Activated T-helper 2 cell treated with anti-CD3 and anti-CD28 coated beads, Interferon-gamma antibody, Interleukin-2, Interleukin-4, amounts not matched to agents 10 μg/mL and 5 μg/mL and 100 μg/mL, durations not matched to agents 14 hours and 24 hours and 36 hours (primary cell): ENCODE measurements at regions of chr1 and their contacts with region 1.

Region 1: DNA sequence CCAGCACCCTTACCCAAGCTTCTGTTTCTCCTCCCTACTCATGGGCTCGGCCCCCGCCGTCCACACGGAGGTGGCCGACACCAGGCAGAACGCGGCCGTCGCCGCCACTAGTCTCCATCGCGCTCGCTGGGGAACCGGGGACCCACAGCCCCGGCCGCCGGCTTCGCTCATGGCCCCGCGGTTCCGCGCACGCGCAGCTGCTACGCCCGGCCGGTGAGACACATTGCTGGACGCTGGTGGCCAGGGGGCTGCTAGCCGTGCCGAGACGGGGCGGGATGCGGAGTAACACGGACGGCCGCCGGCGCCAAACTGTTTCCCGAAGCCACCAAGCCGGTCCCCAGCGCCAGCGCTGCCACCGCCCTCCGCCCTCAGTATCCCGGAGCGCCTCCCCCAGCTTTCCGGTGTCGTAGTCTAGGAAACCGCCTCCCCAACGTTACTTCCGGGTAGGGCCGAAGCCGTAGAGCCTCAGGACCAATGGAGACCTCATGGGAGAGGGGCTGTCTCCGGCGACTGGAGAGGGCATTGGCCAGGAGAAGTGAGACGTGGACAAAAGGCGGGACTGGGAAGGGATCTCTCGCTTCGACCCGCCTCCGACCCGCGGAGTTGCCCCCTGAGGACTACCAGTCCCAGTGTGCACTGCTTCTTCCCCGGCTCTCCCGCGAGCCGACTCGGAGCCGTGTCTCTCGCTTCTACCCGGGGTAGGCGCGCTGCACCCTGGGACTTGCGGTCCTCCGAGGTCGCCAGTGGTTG is at the start of gene EDEM3:
- DNase-seq: peak; percentile 98
- H3K4me3 Mint-ChIP-seq: peak within 1 kb of the TSS; percentile 87
- H3K27ac Mint-ChIP-seq: peak within 1 kb of the TSS; percentile 79
- H3K4me1 Mint-ChIP-seq: peaks cover 41% of the 10 kb centered on the region
- H3K27me3 Mint-ChIP-seq: peaks cover 19% of the 10 kb centered on the region
- total RNA-seq, gene EDEM3: 25.3 and 30.2 TPM in 2 replicates

Region 2: DNA sequence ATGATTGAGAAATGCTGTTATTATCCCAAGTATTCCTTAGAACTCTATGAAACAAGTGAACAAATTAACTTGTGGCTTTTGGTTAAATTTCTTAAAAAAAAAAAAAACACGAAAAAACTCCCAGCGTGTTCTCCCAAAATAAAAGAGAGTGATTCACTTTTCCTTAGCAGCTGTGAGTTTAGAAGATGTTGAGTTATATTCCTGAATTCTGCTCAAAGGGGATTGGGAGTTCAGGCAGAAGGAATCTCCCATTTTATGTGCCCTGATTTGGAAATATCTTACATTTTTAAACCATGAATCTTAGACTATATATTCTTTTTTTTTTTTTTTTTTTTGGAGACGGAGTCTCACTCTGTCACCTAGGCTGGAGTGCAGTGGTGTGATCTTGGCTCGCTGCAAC is 1248.1 kb before region 1 on chr1:
- intact Hi-C with region 1: no loop called
- DNase-seq: no peak
- H3K4me3 Mint-ChIP-seq: no peak overlapping the region
- H3K27ac Mint-ChIP-seq: no peak overlapping the region
- H3K4me1 Mint-ChIP-seq: peaks cover 17% of the 10 kb centered on the region
- H3K27me3 Mint-ChIP-seq: no peaks in the 10 kb centered on the region

Region 3: GRCh38 chr1:183635606-183636333 is 1118.9 kb before region 1 on chr1 and contains the start of gene ARPC5:
- intact Hi-C with region 1: loop called (anchors 10 kb)
- DNase-seq: peak; percentile 96
- H3K4me3 Mint-ChIP-seq: peak within 1 kb of the TSS; percentile 100
- H3K27ac Mint-ChIP-seq: peak within 1 kb of the TSS; percentile 100
- H3K4me1 Mint-ChIP-seq: peaks cover 34% of the 10 kb centered on the region
- H3K27me3 Mint-ChIP-seq: peaks cover 11% of the 10 kb centered on the region
- total RNA-seq, gene ARPC5: 160 and 169 TPM in 2 replicates

Region 4: GRCh38 chr1:184792450-184792969 is 37.9 kb after region 1 on chr1:
- intact Hi-C with region 1: loop called (anchors 5 kb)
- DNase-seq: no peak
- H3K4me3 Mint-ChIP-seq: no peak overlapping the region
- H3K27ac Mint-ChIP-seq: no peak overlapping the region
- H3K4me1 Mint-ChIP-seq: peaks cover 9% of the 10 kb centered on the region
- H3K27me3 Mint-ChIP-seq: no peaks in the 10 kb centered on the region

Region 5: GRCh38 chr1:184892116-184892515 is 137.5 kb after region 1 on chr1:
- intact Hi-C with region 1: loop called (anchors 1 kb)
- DNase-seq: no peak
- H3K4me3 Mint-ChIP-seq: no peak overlapping the region
- H3K27ac Mint-ChIP-seq: peak overlapping the region; percentile 85
- H3K4me1 Mint-ChIP-seq: peaks cover 41% of the 10 kb centered on the region
- H3K27me3 Mint-ChIP-seq: no peaks in the 10 kb centered on the region

Region 6: DNA sequence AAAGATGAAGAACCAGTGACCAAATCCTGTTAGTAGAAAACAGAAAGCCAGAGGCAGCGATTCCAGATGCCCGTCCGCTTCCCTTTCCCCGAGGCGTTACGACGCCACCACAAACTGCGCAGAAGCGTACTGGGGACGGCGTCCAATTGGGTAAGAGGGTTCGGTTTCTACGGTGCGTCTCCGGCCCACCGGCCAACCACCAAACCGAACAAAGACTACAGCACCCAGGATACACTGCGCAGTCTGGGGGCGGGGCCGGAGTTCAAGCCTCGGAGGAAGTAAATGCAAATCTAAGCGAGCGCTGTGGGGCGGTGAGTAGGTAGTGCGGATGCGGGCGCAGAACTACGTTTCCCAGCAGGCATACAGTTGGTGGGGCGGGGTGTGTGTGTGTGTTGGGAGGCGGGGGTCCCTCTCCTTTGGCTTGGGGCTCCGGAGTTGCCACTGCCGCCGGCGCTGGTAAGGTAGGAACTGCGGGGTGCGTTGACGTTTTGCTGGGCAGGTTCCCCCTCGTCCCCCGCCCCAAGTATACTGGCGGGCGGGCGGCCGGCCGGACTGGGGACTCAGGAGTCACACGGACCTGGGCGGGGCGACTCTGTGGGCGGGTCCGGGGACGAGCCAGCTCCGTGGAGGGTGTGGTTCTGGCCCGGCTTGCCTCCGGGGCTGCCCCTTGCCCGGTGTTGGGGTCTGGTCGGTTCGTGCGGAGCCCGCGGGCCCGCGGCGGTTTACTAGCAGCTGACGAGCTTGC is 402.4 kb after region 1 on chr1 and contains the starts of genes SWT1 and TRMT1L:
- intact Hi-C with region 1: loop called (anchors 1 kb)
- DNase-seq: peak; percentile 98
- H3K4me3 Mint-ChIP-seq: peak within 1 kb of the TSS; percentile 95
- H3K27ac Mint-ChIP-seq: peak within 1 kb of the TSS; percentile 95
- H3K4me1 Mint-ChIP-seq: peaks cover 52% of the 10 kb centered on the region
- H3K27me3 Mint-ChIP-seq: no peaks in the 10 kb centered on the region
- total RNA-seq, gene SWT1: 2.1 and 2.7 TPM in 2 replicates
- total RNA-seq, gene TRMT1L: 25.9 and 28.7 TPM in 2 replicates

Region 7: DNA sequence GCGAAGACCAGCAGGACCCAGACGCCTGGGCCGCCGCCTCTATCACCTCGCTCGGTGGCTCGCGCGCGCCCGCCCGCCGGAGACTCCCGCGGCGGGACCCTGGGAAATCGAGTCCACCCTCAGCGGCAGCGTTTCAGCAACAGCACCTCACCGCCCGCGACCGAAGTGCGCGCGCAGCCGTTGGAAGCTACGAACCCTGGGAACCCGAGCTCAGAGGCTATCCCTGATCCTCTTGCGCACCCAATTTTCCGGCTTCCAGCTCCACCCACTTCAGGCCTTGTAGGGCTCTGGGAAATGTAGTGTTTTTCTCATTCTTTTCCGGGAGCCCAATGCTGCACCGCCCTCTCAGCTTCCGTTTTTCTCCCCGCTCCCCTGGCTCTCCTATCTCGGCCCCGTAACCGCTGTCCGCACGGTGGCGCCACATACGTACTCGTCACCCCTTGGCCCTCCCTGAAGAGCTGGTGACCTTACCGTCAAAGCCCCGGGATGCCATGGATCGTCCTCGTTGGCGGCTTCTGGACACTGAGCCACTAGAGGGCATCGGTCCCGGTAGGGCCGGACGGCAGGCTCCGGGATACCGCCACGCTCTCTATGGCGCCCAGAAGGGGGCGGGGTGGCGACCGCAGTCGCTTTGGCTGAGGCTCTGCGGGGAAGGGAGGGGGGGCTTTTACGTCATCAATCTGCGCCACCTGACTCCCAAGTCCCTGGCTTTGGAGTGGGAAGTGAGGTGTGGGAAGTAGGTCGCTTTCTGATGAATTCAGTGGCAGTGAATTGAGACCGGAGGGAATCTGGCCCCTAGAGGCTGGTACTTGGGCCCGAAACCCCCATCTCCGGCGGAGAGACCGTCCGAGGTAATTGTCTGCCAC is 1620.7 kb after region 1 on chr1 and contains the starts of genes ODR4 and TPR:
- intact Hi-C with region 1: loop called (anchors 10 kb)
- DNase-seq: peak; percentile 97
- H3K4me3 Mint-ChIP-seq: peak within 1 kb of the TSS; percentile 96
- H3K27ac Mint-ChIP-seq: peak within 1 kb of the TSS; percentile 97
- H3K4me1 Mint-ChIP-seq: peaks cover 31% of the 10 kb centered on the region
- H3K27me3 Mint-ChIP-seq: no peaks in the 10 kb centered on the region
- total RNA-seq, gene ODR4: 16.1 and 17.0 TPM in 2 replicates
- total RNA-seq, gene TPR: 154 and 160 TPM in 2 replicates